AG04449 (cell line): ENCODE measurements at regions of chr6 and their contacts with region 1.

Region 1: GRCh38 chr6:35452186-35453090 is at the start of gene FANCE:
- DNase-seq: no peak
- H3K4me3 ChIP-seq: peak within 1 kb of the TSS; percentile 77
- CTCF ChIP-seq: no peak

Region 2: DNA sequence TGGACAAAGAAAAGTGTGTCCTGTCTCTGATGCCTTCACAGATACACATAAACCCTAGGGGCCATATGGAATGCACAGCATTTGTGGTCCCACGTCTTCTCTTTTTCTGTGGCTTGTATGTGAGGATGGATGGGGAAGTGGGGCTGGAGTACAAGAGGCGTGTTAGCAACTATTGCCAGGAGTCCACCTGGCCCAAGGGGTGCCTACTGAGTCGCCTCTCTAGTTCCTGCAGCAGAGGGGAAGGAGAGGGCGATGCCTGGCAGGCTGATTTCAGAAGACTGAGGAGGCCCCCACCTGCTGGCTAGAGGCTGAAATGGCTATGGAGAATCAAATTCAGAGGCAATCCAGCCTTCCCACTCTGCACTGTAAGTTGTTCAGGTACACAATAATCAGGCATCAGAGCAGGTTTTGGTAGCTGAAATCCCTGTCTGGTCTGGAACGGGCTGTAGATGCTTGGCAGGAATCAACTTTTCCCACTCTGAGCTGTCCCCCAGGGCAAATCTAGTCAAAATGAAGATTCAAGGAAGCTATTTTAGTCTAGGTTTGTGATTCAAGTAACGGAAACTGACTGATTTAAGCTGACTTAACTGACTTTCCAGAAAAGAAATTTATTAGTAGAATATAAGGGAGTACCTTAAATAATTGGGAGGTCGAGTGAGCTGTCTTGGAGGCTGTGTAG is 125.0 kb before region 1 on chr6:
- CTCF ChIA-PET with region 1: interaction called, 54 read pairs
- POLR2A ChIA-PET with region 1: no interaction called
- DNase-seq: no peak
- H3K4me3 ChIP-seq: no peak overlapping the region
- CTCF ChIP-seq: peak; percentile 81

Region 3: DNA sequence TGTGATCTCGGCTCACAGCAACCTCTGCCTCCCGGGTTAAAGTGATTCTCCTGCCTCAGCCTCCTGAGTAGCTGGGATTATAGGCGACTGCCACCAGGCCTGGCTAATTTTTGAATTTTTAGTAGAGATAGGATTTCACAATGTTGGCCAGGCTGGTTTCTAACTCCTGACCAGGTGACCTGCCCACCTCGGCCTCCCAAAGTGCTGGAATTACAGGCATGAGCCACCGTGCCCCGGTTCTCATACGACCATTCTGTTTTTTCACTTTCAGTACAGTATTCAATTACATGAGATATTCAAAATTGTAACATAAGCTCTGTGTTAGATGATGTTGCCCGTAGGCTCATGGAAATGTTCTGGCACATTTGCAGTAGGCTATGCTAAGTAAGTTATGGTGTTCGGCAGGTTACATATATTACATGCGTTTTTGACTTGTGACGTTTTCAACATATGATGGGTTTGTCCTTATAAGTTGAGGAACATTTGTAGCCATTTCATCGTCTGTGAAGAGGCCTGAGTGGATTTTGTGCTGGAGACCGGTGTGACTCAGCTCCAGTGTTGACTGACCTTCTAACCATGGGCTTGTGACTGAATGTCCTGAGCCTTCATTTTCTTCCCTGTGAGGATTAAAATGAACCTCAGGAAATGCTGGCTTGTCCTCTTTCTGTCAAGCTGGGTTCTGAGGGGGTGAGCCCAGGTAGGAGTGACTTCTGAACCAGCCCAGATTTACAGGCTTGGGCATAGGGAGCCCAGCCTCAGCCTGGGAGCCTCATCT is 97.9 kb before region 1 on chr6:
- CTCF ChIA-PET with region 1: interaction called, 430 read pairs
- POLR2A ChIA-PET with region 1: no interaction called
- DNase-seq: no peak
- H3K4me3 ChIP-seq: no peak overlapping the region
- CTCF ChIP-seq: no peak

Region 4: GRCh38 chr6:35378261-35378660 is 74.2 kb before region 1 on chr6:
- CTCF ChIA-PET with region 1: interaction called, 10 read pairs
- POLR2A ChIA-PET with region 1: no interaction called
- DNase-seq: no peak
- H3K4me3 ChIP-seq: no peak overlapping the region
- CTCF ChIP-seq: no peak

Region 5: GRCh38 chr6:35415065-35415991 is 37.1 kb before region 1 on chr6:
- CTCF ChIA-PET with region 1: interaction called, 349 read pairs
- POLR2A ChIA-PET with region 1: no interaction called
- DNase-seq: peak; percentile 69
- H3K4me3 ChIP-seq: no peak overlapping the region
- CTCF ChIP-seq: peak; percentile 68

Region 6: DNA sequence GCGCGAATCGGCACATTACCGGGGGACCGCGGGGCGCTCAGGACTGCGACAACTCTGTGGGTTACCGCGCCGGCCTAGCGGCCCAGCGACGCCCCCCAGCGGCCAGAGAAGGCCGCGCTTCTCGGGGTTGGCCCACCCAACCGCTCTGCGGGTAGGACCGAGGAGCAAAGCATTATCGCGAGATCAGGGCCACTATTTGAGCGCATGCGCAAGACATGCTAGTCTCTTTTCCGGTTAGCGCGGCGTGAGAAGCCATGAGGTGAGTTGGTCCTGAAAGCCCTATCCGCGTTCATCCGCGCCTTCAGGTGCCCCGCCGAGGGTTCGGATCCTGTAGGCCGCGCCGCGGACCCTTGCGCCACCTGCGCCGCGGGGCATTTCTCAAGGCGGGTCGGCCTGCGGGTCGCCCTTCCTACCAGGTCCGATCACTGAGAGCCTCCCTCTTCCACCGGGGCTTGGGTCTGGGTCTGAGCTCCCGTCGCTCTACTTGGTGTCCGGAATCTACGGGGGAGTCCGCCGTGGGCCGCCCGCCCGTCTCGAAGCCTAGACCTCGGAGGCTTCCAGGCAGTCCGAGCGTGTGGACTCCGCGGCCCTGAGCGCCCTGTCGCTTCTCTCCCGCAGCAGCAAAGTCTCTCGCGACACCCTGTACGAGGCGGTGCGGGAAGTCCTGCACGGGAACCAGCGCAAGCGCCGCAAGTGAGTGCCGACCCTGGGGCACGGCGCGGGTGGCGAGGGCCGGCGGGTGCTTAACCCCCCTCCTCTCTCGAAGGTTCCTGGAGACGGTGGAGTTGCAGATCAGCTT is 15.9 kb after region 1 on chr6 and contains the start of gene RPL10A:
- CTCF ChIA-PET with region 1: interaction called, 119 read pairs
- POLR2A ChIA-PET with region 1: interaction called, 4 read pairs
- DNase-seq: peak; percentile 73
- H3K4me3 ChIP-seq: peak within 1 kb of the TSS; percentile 94
- CTCF ChIP-seq: peak; percentile 96